ENCODE measurements at regions of chr10 and their contacts with region 1.

Region 1: DNA sequence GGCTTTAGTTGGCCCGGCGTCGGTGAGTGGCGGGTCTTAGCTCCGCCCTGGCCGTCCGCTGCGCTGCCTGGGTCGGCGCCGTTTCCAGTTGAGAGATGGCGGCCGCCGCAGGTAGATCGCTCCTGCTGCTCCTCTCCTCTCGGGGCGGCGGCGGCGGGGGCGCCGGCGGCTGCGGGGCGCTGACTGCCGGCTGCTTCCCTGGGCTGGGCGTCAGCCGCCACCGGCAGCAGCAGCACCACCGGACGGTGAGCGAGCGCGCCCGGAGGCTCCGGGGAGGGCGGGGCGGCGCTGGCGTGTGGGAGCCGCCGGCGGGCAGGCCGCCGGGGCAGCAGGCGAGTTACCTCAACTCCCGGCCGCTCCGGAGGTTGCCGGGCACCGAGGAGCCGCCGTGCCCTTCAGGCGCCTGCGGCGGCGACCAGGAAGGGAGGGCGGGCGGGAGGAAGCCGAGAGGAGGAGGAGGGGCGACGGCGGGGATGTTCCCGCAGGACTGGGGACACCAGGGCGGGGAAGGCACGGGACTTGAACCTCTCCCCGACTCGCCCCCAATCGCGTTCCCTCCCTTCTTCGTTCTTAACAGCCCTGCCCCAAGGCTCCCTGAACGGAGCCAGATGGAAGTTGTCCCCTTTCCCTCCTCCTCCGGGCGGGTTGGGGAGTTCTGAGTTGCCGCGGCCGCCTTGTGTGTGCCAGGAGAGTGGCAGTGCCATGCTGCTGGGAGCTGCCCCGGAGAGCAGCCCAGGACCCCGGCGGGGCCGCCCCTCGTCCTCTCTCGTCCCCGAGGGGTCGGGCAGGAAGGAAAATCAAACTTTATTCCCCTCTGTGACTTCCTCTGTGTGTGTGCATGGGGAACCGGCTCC is at the start of gene MCU:
- DNase-seq: peak; percentile 85 to 96 (median 92)
- ATAC-seq: peak; percentile 95
- H3K4me3 ChIP-seq: peak within 1 kb of the TSS; percentile 84 to 89
- H3K4me3 Mint-ChIP-seq: peak within 1 kb of the TSS; percentile 92
- H3K27ac ChIP-seq: peak within 1 kb of the TSS; percentile 37 to 45
- H3K27ac Mint-ChIP-seq: peak within 1 kb of the TSS; percentile 88
- H3K4me1 ChIP-seq: peaks cover 18% of the 10 kb centered on the region
- H3K4me1 Mint-ChIP-seq: peaks cover 33% of the 10 kb centered on the region
- H3K27me3 ChIP-seq: no peaks in the 10 kb centered on the region
- H3K27me3 Mint-ChIP-seq: peaks cover 4% of the 10 kb centered on the region
- CTCF ChIP-seq: no peak
- total RNA-seq, gene MCU: 6.7 to 7.2 TPM

Region 2: GRCh38 chr10:71771821-71772617 is 920.3 kb before region 1 on chr10:
- CTCF ChIA-PET with region 1: no interaction called
- POLR2A ChIA-PET with region 1: no interaction called
- intact Hi-C with region 1: loop called in 1 of 2 experiments (anchors 5 kb)
- DNase-seq: peak in 2 of 9 experiments; percentile 30 to 50
- ATAC-seq: no peak
- H3K4me3 ChIP-seq: peak overlapping the region; percentile 88 to 100
- H3K4me3 Mint-ChIP-seq: peak overlapping the region; percentile 95
- H3K27ac ChIP-seq: peak overlapping the region; percentile 80 to 89
- H3K27ac Mint-ChIP-seq: peak overlapping the region; percentile 92
- H3K4me1 ChIP-seq: peaks cover 73% of the 10 kb centered on the region
- H3K4me1 Mint-ChIP-seq: peaks cover 81% of the 10 kb centered on the region
- H3K27me3 ChIP-seq: no peaks in the 10 kb centered on the region
- H3K27me3 Mint-ChIP-seq: no peaks in the 10 kb centered on the region
- CTCF ChIP-seq: no peak

Region 3: DNA sequence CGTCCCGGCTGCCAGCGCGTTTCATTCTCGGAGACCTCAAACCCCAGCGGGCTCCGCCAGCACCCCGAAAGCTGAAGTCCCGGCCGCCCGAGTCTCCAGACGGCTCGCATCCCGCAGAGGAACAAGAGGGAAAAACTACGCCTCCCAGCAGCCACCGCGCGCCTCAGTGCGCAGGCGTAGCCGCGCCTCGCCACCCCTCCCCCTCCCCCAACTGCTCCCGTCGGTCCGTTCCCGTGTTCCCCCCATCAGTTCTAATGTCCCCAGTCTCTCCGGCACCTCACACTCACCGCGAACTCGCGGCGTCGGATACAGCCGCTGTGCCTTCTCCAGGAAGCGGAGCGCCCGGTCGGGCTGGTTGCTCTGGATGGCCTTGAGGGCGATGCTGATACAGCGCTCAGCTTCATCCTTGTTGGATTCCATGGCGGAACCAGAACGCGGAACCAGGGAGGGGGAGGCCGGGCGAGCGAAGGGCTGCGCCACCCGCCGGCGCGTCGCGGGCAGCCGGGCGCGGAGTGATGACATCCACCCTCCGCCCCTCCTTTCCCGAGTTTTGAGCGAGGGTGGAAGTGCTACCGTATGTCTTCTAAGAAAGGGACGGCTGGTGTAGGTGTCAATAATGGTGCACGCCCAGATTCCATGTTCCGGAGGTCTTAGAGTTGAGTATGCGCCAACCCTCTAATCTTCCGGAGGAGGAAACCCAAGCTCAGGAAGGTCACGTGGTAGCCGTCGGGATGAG is 337.6 kb before region 1 on chr10 and contains the start of gene DNAJB12:
- CTCF ChIA-PET with region 1: interaction called, 3 read pairs
- POLR2A ChIA-PET with region 1: no interaction called
- intact Hi-C with region 1: loop called in 1 of 2 experiments (anchors 2 kb)
- DNase-seq: peak; percentile 76 to 95 (median 88)
- ATAC-seq: peak; percentile 82
- H3K4me3 ChIP-seq: peak within 1 kb of the TSS; percentile 96 to 98
- H3K4me3 Mint-ChIP-seq: peak within 1 kb of the TSS; percentile 98
- H3K27ac ChIP-seq: peak within 1 kb of the TSS; percentile 87 to 97
- H3K27ac Mint-ChIP-seq: peak within 1 kb of the TSS; percentile 96
- H3K4me1 ChIP-seq: peaks cover 19% of the 10 kb centered on the region
- H3K4me1 Mint-ChIP-seq: peaks cover 45% of the 10 kb centered on the region
- H3K27me3 ChIP-seq: no peaks in the 10 kb centered on the region
- H3K27me3 Mint-ChIP-seq: no peaks in the 10 kb centered on the region
- CTCF ChIP-seq: no peak
- total RNA-seq, gene DNAJB12: 33.9 to 37.5 TPM

Region 4: GRCh38 chr10:72625608-72626443 is 66.5 kb before region 1 on chr10 and contains the start of gene MICU1:
- CTCF ChIA-PET with region 1: no interaction called
- POLR2A ChIA-PET with region 1: interaction called, 7 read pairs
- intact Hi-C with region 1: loop called (anchors 1 kb)
- DNase-seq: peak; percentile 84 to 97 (median 93)
- ATAC-seq: peak; percentile 99
- H3K4me3 ChIP-seq: peak within 1 kb of the TSS; percentile 91 to 99
- H3K4me3 Mint-ChIP-seq: peak within 1 kb of the TSS; percentile 98
- H3K27ac ChIP-seq: peak within 1 kb of the TSS; percentile 63 to 64
- H3K27ac Mint-ChIP-seq: peak within 1 kb of the TSS; percentile 92
- H3K4me1 ChIP-seq: peaks cover 11% of the 10 kb centered on the region
- H3K4me1 Mint-ChIP-seq: peaks cover 23% of the 10 kb centered on the region
- H3K27me3 ChIP-seq: no peaks in the 10 kb centered on the region
- H3K27me3 Mint-ChIP-seq: no peaks in the 10 kb centered on the region
- CTCF ChIP-seq: no peak
- total RNA-seq, gene MICU1: 8.2 to 11.3 TPM

Region 5: DNA sequence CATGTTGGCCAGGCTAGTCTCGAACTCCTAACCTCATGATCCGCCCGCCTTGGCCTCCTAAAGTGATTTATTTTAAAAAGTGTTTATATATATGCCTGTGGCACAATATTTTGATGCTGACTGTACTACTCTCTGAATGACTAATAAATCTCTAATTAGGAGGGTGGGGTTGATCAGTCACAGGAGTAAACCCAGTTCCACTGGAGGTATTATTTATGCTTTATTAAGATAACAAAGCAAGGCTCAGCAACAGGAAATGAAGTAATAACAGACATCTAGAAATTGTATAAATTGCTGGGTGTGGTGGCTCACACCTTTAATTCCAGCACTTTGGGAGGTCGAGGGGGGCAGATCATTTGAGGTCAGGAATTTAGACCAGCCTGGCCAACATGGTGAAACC is 26.4 kb before region 1 on chr10:
- CTCF ChIA-PET with region 1: no interaction called
- POLR2A ChIA-PET with region 1: no interaction called
- intact Hi-C with region 1: no loop called
- DNase-seq: no peak
- ATAC-seq: no peak
- H3K4me3 ChIP-seq: no peak overlapping the region
- H3K4me3 Mint-ChIP-seq: no peak overlapping the region
- H3K27ac ChIP-seq: no peak overlapping the region
- H3K27ac Mint-ChIP-seq: no peak overlapping the region
- H3K4me1 ChIP-seq: no peaks in the 10 kb centered on the region
- H3K4me1 Mint-ChIP-seq: no peaks in the 10 kb centered on the region
- H3K27me3 ChIP-seq: no peaks in the 10 kb centered on the region
- H3K27me3 Mint-ChIP-seq: peaks cover 5% of the 10 kb centered on the region
- CTCF ChIP-seq: no peak

Region 6: DNA sequence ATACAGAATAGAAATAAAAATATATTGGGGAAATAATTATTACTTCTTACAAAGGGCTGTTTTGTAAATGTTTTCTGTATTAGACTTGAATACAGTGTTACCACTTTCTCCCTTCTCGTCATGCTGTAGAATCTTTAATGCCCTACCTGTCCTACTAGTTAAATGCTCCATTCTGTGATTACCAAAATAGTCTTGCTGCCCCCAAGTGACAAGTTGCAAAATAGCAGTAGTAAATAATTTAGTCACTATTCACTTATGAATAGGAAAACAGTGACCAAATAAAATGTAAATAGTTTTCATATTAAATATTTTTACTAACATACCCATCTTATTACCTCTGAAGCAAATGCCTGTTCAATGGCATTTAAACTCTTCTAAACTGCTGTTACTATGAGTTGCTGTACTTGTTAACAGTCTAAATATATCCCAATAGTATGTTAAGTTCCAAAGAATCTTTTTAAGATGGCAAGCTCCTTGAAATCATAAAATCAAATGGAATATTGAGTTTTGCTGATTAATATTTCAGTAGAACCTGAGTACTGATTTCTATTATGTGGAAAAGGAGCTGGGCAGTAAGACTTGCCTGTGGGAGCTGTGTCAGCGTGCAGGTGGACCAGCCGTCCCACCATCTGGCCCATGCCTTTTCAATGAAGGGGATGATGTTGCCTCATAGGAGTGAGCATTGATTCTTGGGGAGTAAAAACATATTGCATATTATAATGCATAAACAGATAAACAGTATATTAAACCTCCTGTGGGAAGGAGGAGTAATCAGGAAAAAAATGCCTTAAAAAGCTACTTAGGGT is 183.2 kb after region 1 on chr10:
- CTCF ChIA-PET with region 1: no interaction called
- POLR2A ChIA-PET with region 1: no interaction called
- intact Hi-C with region 1: loop called in 1 of 2 experiments (anchors 1 kb)
- DNase-seq: peak in 2 of 9 experiments; percentile 37 to 51
- ATAC-seq: no peak
- H3K4me3 ChIP-seq: no peak overlapping the region
- H3K4me3 Mint-ChIP-seq: no peak overlapping the region
- H3K27ac ChIP-seq: no peak overlapping the region
- H3K27ac Mint-ChIP-seq: no peak overlapping the region
- H3K4me1 ChIP-seq: no peaks in the 10 kb centered on the region
- H3K4me1 Mint-ChIP-seq: no peaks in the 10 kb centered on the region
- H3K27me3 ChIP-seq: no peaks in the 10 kb centered on the region
- H3K27me3 Mint-ChIP-seq: no peaks in the 10 kb centered on the region
- CTCF ChIP-seq: peak; percentile 40

Region 7: DNA sequence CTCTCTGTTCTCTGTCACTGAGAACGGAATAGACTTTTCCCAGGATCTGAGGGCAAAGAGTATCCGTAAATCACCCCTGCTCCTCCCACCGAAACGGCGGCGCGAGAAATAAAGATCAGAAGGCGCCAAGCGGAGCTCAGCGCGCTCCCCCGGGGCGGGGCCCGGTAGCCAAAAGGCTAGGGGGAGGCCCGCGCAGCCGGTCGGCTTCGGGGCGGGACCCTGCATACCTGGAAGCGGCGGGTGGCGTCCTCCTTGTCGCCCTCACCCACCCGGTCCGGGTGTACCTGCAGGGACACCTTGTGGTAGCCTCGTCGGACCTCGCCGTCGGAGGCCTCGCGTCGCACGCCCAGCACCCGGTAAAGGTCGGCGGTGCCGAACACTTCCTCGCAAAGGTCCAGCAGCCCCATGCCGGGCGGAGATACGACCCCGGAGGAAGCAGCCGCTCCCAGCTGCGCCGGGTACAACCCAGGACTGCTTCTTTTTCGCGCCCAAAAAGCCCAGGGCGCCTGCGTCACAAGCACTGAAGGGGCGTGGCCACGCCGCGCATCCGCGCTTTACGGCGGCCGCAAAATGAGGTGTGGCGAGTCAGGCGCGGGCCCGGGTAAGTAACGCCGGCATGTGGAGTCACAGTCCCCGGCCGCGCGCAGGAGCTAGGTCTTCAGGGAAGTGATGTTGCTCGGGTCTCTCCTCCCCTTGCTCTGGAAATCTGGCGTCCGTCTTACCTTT is 554.7 kb after region 1 on chr10 and contains the start of gene DNAJC9:
- CTCF ChIA-PET with region 1: no interaction called
- POLR2A ChIA-PET with region 1: no interaction called
- intact Hi-C with region 1: loop called (anchors 5 kb)
- DNase-seq: peak; percentile 95 to 98 (median 97)
- ATAC-seq: peak; percentile 88
- H3K4me3 ChIP-seq: peak within 1 kb of the TSS; percentile 88 to 95
- H3K4me3 Mint-ChIP-seq: peak within 1 kb of the TSS; percentile 96
- H3K27ac ChIP-seq: peak within 1 kb of the TSS; percentile 85 to 89
- H3K27ac Mint-ChIP-seq: peak within 1 kb of the TSS; percentile 97
- H3K4me1 ChIP-seq: peaks cover 34% of the 10 kb centered on the region
- H3K4me1 Mint-ChIP-seq: peaks cover 59% of the 10 kb centered on the region
- H3K27me3 ChIP-seq: no peaks in the 10 kb centered on the region
- H3K27me3 Mint-ChIP-seq: no peaks in the 10 kb centered on the region
- CTCF ChIP-seq: peak; percentile 19
- total RNA-seq, gene DNAJC9: 17.6 to 18.4 TPM

Region 8: GRCh38 chr10:73296946-73297345 is 604.7 kb after region 1 on chr10:
- CTCF ChIA-PET with region 1: no interaction called
- POLR2A ChIA-PET with region 1: no interaction called
- intact Hi-C with region 1: no loop called
- DNase-seq: no peak
- ATAC-seq: no peak
- H3K4me3 ChIP-seq: no peak overlapping the region
- H3K4me3 Mint-ChIP-seq: no peak overlapping the region
- H3K27ac ChIP-seq: no peak overlapping the region
- H3K27ac Mint-ChIP-seq: no peak overlapping the region
- H3K4me1 ChIP-seq: no peaks in the 10 kb centered on the region
- H3K4me1 Mint-ChIP-seq: peaks cover 2% of the 10 kb centered on the region
- H3K27me3 ChIP-seq: no peaks in the 10 kb centered on the region
- H3K27me3 Mint-ChIP-seq: no peaks in the 10 kb centered on the region
- CTCF ChIP-seq: no peak

Region 9: GRCh38 chr10:73413528-73414229 is 721.4 kb after region 1 on chr10 and contains the start of gene ANXA7:
- CTCF ChIA-PET with region 1: no interaction called
- POLR2A ChIA-PET with region 1: no interaction called
- intact Hi-C with region 1: loop called in 1 of 2 experiments (anchors 10 kb)
- DNase-seq: peak; percentile 85 to 95 (median 94)
- ATAC-seq: peak; percentile 95
- H3K4me3 ChIP-seq: peak within 1 kb of the TSS; percentile 85 to 97
- H3K4me3 Mint-ChIP-seq: peak within 1 kb of the TSS; percentile 88
- H3K27ac ChIP-seq: peak within 1 kb of the TSS; percentile 95 to 96
- H3K27ac Mint-ChIP-seq: peak within 1 kb of the TSS; percentile 92
- H3K4me1 ChIP-seq: peaks cover 14% of the 10 kb centered on the region
- H3K4me1 Mint-ChIP-seq: peaks cover 47% of the 10 kb centered on the region
- H3K27me3 ChIP-seq: no peaks in the 10 kb centered on the region
- H3K27me3 Mint-ChIP-seq: no peaks in the 10 kb centered on the region
- CTCF ChIP-seq: no peak
- total RNA-seq, gene ANXA7: 94.8 to 95.6 TPM

Measured in CD8-positive, alpha-beta T cell (primary cell).